PC-9 (cell line): ENCODE measurements at regions of chr3 and their contacts with region 1.

Region 1: DNA sequence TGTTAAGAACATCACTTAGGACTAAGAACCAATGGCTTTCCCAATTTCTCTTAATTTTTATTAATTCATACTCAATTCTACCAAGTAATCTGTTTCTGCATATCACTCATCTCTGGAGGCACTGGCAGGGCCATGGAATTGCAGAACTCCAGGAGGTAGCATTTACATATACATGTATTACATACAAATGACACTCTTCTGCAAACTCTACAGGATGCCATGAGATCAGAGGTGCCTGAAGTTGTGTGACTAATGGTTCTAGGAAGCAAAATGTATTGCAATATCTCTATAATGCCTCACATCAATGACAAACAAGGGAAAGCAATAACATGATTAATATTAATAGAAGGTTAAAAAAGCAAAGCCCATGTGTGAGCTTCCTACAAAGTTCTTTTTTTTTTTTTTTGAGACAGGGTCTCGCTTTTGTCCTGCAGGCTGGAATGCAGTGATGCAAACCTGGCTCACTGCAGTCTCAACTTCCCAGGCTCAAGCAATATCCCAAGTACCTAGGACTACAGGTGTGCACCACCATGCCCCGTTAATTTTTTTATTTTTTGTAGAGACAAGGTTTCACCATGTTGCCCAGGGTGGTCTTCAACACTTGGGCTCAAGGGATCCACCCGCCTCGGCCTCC is 33.0 kb downstream of the DENND6A start:
- DNase-seq: no peak
- H3K4me3 ChIP-seq: no peak overlapping the region
- H3K27ac ChIP-seq: no peak overlapping the region
- H3K4me1 ChIP-seq: peaks cover 7% of the 10 kb centered on the region; the same call in 1 of the 2 replicates
- H3K27me3 ChIP-seq: no peaks in the 10 kb centered on the region
- CTCF ChIP-seq: no peak

Region 2: GRCh38 chr3:57068437-57069089 is 591.4 kb before region 1 on chr3:
- CTCF ChIA-PET with region 1: no interaction called
- POLR2A ChIA-PET with region 1: no interaction called
- intact Hi-C with region 1: no loop called
- DNase-seq: peak; percentile 78 to 97
- H3K4me3 ChIP-seq: peak overlapping the region; percentile 38; the same call in 1 of the 2 replicates
- H3K27ac ChIP-seq: peak overlapping the region; percentile 91
- H3K4me1 ChIP-seq: peaks cover 60% of the 10 kb centered on the region
- H3K27me3 ChIP-seq: no peaks in the 10 kb centered on the region
- CTCF ChIP-seq: no peak

Region 3: GRCh38 chr3:57616233-57616632 is 43.7 kb before region 1 on chr3:
- CTCF ChIA-PET with region 1: no interaction called
- POLR2A ChIA-PET with region 1: interaction called, 14 read pairs
- intact Hi-C with region 1: no loop called
- DNase-seq: no peak
- H3K4me3 ChIP-seq: no peak overlapping the region
- H3K27ac ChIP-seq: no peak overlapping the region
- H3K4me1 ChIP-seq: no peaks in the 10 kb centered on the region
- H3K27me3 ChIP-seq: no peaks in the 10 kb centered on the region
- CTCF ChIP-seq: no peak